HCT116 (cell line): ENCODE measurements at regions of chr11 and their contacts with region 1.

Region 1: DNA sequence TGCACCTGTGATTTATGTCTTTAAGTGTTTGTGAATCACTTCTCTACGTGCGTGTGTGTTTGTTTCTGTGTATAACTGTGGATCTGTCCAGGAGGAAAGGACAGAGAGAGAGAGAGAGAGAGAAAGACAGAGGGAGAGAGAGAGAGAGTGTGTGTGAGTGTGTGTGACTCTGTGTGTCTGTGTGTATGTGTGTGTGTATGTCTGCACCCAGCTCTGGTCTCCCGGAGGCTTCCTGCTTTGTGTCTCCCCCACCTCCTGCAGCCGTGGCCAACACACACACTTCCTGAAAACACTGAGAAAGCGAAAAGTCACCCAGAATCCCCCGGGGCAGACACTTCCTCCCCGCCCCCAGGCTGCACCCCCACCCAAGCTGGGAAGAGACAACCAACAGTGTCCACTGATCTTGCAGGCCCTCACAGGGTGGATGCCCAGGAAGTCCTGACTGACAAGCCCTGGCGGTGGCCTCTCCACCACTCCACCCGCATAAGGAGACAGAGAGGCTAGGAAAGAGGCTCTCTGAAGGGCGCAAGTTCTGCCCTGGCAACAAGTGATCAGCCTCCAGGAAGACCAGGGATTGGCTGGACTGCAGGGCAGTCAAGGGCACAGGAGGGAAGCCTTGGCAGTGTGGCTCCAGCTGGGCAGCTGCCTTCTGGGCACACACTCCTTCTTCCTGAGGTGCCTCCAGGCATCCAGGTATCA is 30.0 kb downstream of the ARAP1 start:
- DNase-seq: peak; percentile 81
- ATAC-seq: peak; percentile 99
- H3K4me3 ChIP-seq: peak overlapping the region; percentile 57 to 64
- H3K27ac ChIP-seq: peak overlapping the region; percentile 71
- H3K4me1 ChIP-seq: peaks cover 8 to 21% of the 10 kb centered on the region in 2 experiments
- H3K27me3 ChIP-seq: no peaks in the 10 kb centered on the region
- CTCF ChIP-seq: no peak
- POLR2A ChIP-seq: peak; percentile 25
- RAD21 ChIP-seq: no peak

Region 2: GRCh38 chr11:72040726-72041441 is 681.3 kb before region 1 on chr11:
- CTCF ChIA-PET with region 1: no interaction called
- POLR2A ChIA-PET with region 1: no interaction called
- RAD21 ChIA-PET with region 1: no interaction called
- intact Hi-C with region 1: no loop called
- DNase-seq: peak; percentile 72
- ATAC-seq: peak; percentile 67
- H3K4me3 ChIP-seq: peak overlapping the region; percentile 57 to 63
- H3K27ac ChIP-seq: peak overlapping the region; percentile 83
- H3K4me1 ChIP-seq: peaks cover 24 to 53% of the 10 kb centered on the region in 2 experiments
- H3K27me3 ChIP-seq: no peaks in the 10 kb centered on the region
- CTCF ChIP-seq: no peak; a peak in 1 of 6 replicates
- POLR2A ChIP-seq: no peak
- RAD21 ChIP-seq: no peak

Region 3: GRCh38 chr11:72814286-72815109 is 92.3 kb after region 1 on chr11 and contains the start of gene ATG16L2:
- CTCF ChIA-PET with region 1: interaction called, 27 read pairs
- POLR2A ChIA-PET with region 1: no interaction called
- RAD21 ChIA-PET with region 1: interaction called in 1 of 2 experiments, 5 read pairs
- intact Hi-C with region 1: loop called (anchors 1 kb)
- DNase-seq: peak; percentile 71
- ATAC-seq: peak; percentile 80
- H3K4me3 ChIP-seq: peak within 1 kb of the TSS; percentile 85 to 95
- H3K27ac ChIP-seq: peak within 1 kb of the TSS; percentile 97
- H3K4me1 ChIP-seq: peaks cover 9 to 38% of the 10 kb centered on the region in 2 experiments; a peak in 3 of 4 replicates
- H3K27me3 ChIP-seq: no peaks in the 10 kb centered on the region
- CTCF ChIP-seq: no peak
- POLR2A ChIP-seq: no peak
- RAD21 ChIP-seq: no peak
- total RNA-seq, gene ATG16L2: 15.2 TPM

Region 4: GRCh38 chr11:72831513-72832300 is 109.5 kb after region 1 on chr11:
- CTCF ChIA-PET with region 1: interaction called, 10 read pairs
- POLR2A ChIA-PET with region 1: no interaction called
- RAD21 ChIA-PET with region 1: interaction called in 1 of 2 experiments, 10 read pairs
- intact Hi-C with region 1: no loop called
- DNase-seq: peak; percentile 54
- ATAC-seq: peak; percentile 98
- H3K4me3 ChIP-seq: no peak overlapping the region
- H3K27ac ChIP-seq: no peak overlapping the region
- H3K4me1 ChIP-seq: peaks cover 0 to 6% of the 10 kb centered on the region in 2 experiments; a peak in 2 of 4 replicates
- H3K27me3 ChIP-seq: no peaks in the 10 kb centered on the region
- CTCF ChIP-seq: peak; percentile 91 to 97 (median 93)
- POLR2A ChIP-seq: no peak
- RAD21 ChIP-seq: peak; percentile 95